SK-N-SH (cell line): ENCODE measurements at regions of chr3 and their contacts with region 1.

Region 1: GRCh38 chr3:194404365-194405140 is 5.5 kb upstream of the GP5 start:
- DNase-seq: no peak
- H3K4me3 ChIP-seq: no peak overlapping the region; a peak in 1 of 4 replicates
- H3K27ac ChIP-seq: 0 out of 4 replicates have a peak overlapping the region, but pooled peaks of 1 of the 2 experiments have one; percentile 0
- H3K4me1 ChIP-seq: no peaks in the 10 kb centered on the region
- H3K27me3 ChIP-seq: no peaks in the 10 kb centered on the region
- CTCF ChIP-seq: peak; percentile 86
- EP300 ChIP-seq: no peak
- RAD21 ChIP-seq: peak; percentile 86

Region 2: GRCh38 chr3:194364652-194365434 is 39.7 kb before region 1 on chr3:
- CTCF ChIA-PET with region 1: interaction called, 10 read pairs
- POLR2A ChIA-PET with region 1: no interaction called
- DNase-seq: peak; percentile 72
- H3K4me3 ChIP-seq: no peak overlapping the region
- H3K27ac ChIP-seq: peak overlapping the region; percentile 20 to 74; a peak in 3 of 4 replicates
- H3K4me1 ChIP-seq: peaks cover 15 to 41% of the 10 kb centered on the region in 2 experiments; a peak in 3 of 4 replicates
- H3K27me3 ChIP-seq: no peaks in the 10 kb centered on the region; the same call in 1 of the 2 replicates
- CTCF ChIP-seq: no peak
- EP300 ChIP-seq: peak in 1 of 2 experiments; percentile 78; a peak in 2 of 4 replicates
- RAD21 ChIP-seq: no peak

Region 3: DNA sequence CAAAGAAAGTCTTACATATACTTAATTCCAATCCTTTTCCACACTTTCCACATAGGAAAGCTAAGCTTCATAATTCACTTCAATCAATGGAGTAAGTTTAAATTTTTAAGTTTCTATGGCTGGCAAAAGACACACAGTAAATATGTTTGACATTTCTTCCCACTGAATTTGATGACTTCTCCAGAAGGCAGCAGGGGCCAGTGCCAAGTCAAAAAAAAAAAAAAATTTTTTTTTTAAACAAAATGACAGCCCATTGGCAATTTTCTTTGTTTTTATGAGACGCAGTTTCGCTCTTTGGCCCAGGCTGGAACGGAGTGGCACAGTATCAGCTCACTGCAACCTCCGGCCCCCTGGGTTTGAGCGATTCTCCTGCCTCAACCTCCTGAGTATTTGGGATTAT is 53.6 kb after region 1 on chr3:
- CTCF ChIA-PET with region 1: no interaction called
- POLR2A ChIA-PET with region 1: no interaction called
- DNase-seq: no peak
- H3K4me3 ChIP-seq: no peak overlapping the region
- H3K27ac ChIP-seq: no peak overlapping the region
- H3K4me1 ChIP-seq: peaks cover 0 to 3% of the 10 kb centered on the region in 2 experiments; a peak in 2 of 4 replicates
- H3K27me3 ChIP-seq: no peaks in the 10 kb centered on the region
- CTCF ChIP-seq: peak; percentile 58
- EP300 ChIP-seq: no peak
- RAD21 ChIP-seq: no peak

Region 4: DNA sequence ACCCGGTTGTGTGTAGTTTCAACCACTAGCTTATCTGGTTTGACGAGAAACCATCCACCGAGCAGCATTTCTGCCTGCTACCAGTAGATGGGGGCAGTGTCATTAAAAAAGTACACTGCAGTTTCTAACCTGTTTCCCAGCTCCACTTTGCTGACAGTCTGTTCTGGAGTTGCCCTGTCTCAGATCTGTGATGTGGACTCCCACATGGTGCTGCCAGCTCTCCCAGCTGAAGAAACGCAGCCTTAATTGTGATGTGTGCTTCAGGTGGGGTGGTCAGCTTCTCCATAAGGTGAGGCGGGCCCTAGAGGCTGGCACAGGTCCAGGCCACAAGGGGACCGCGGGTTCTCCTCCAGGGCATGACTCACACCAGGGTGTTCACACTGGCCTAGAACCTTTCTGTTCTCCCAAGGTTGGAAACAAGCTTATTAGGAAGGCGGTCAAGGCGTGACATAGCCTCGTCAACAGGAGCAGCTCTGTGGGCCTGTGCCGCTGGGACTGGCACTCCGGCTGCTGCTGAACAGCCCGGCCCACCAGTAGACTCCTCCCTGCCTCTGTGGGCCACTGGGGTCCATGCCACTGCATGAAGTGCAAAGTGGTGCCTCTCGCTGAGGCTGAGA is 278.2 kb after region 1 on chr3:
- CTCF ChIA-PET with region 1: no interaction called
- POLR2A ChIA-PET with region 1: no interaction called
- DNase-seq: peak; percentile 81
- H3K4me3 ChIP-seq: peak overlapping the region in 1 of 2 experiments; percentile 25; a peak in 1 of 4 replicates
- H3K27ac ChIP-seq: peak overlapping the region in 1 of 2 experiments; percentile 26; a peak in 1 of 4 replicates
- H3K4me1 ChIP-seq: peaks cover 5 to 28% of the 10 kb centered on the region in 2 experiments; a peak in 1 of 4 replicates
- H3K27me3 ChIP-seq: no peaks in the 10 kb centered on the region
- CTCF ChIP-seq: peak; percentile 93
- EP300 ChIP-seq: no peak
- RAD21 ChIP-seq: peak; percentile 100

Region 5: GRCh38 chr3:194884649-194885315 is 480.2 kb after region 1 on chr3:
- CTCF ChIA-PET with region 1: no interaction called
- POLR2A ChIA-PET with region 1: no interaction called
- DNase-seq: no peak
- H3K4me3 ChIP-seq: no peak overlapping the region
- H3K27ac ChIP-seq: no peak overlapping the region
- H3K4me1 ChIP-seq: peaks cover 0 to 23% of the 10 kb centered on the region in 2 experiments; a peak in 2 of 4 replicates
- H3K27me3 ChIP-seq: no peaks in the 10 kb centered on the region
- CTCF ChIP-seq: no peak
- EP300 ChIP-seq: no peak
- RAD21 ChIP-seq: no peak